Activated T-helper 1 cell treated with anti-CD3 and anti-CD28 coated beads, Interleukin-12 subunit alpha, Interleukin-12 subunit beta, Interleukin-2, Interleukin-4 antibody, amounts not matched to agents 30 ng/mL and 10 ng/mL and 1 ng/mL, durations not matched to agents 14 hours and 24 hours and 36 hours (primary cell): ENCODE measurements at regions of chr14 and their contacts with region 1.

Region 1: DNA sequence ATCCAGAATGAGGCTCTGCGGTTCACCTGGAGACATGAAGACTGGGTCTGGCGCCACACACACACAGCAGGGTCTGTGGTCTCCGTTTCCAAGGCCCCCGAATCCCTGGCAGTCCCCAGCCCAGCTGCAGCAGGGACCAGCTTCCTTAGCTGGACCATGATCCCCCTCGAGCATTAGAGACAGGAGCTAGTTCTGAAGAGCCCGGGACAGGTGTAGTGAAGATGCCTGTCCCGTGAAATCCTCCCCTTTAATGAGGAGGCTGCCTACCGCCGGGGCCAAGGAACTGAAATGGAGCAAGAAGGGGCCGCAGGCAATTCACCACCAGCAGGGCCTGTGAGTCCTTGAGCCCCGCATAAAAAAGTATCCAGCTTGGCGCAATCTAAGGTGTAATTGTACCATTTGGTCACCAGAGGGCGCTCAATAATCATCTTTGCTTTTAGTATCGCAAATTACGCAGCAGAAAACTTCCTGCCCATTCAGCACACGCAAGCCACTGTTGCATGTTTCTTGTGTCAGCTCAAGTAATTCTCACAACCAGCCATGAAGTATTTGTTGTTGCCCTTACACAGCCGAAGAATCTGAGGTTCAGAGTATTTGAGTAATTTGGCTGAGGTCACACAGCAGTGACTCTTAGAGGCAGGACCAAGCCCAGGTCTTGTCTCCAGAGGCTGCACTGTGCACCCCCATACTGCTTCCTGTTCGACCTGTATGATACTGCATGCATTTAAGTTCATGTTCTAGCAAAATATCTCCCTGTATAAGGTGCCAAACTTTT is 54.3 kb upstream of the PPP2R5C start:
- DNase-seq: peak; percentile 62
- H3K4me3 Mint-ChIP-seq: peak overlapping the region; percentile 0
- H3K27ac Mint-ChIP-seq: peak overlapping the region; percentile 63
- H3K4me1 Mint-ChIP-seq: peaks cover 31% of the 10 kb centered on the region
- H3K27me3 Mint-ChIP-seq: peaks cover 20% of the 10 kb centered on the region

Region 2: DNA sequence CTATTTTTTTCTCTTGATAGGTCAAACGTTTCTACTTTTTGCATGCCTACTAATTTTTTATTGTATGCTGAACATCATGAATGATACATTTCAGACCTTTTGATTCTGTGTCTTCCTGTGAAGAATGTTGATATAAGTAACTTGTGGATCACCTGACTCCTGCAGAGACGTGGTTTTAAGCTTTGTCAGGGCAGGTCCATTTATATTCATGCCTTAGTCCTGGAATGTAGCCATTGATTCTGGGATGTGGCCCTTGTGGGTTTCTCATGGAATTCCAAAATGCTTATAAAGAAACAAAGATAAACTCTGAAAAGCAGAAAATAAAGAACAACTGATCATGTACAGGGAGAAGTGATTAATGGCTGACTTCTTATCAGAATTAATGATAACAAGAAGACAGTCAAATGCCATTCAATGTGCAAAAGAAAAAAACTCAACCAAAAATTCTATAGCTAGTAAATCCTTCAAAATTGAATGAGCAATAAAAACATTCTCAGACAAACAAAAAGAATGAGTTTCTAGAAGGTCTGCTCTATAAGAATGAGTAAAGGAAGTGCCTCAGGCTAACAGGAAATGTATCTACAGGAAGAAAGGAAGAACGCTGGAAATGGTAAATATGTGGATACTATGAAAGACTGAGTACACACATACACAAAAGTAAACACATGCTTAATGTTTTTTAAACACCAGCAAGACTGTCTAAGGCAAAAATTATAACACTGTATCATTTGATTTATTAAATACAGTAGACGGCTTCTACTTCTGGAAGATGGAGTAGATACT is 430.8 kb before region 1 on chr14:
- intact Hi-C with region 1: no loop called
- DNase-seq: no peak
- H3K4me3 Mint-ChIP-seq: no peak overlapping the region
- H3K27ac Mint-ChIP-seq: no peak overlapping the region
- H3K4me1 Mint-ChIP-seq: no peaks in the 10 kb centered on the region
- H3K27me3 Mint-ChIP-seq: peaks cover 12% of the 10 kb centered on the region

Region 3: DNA sequence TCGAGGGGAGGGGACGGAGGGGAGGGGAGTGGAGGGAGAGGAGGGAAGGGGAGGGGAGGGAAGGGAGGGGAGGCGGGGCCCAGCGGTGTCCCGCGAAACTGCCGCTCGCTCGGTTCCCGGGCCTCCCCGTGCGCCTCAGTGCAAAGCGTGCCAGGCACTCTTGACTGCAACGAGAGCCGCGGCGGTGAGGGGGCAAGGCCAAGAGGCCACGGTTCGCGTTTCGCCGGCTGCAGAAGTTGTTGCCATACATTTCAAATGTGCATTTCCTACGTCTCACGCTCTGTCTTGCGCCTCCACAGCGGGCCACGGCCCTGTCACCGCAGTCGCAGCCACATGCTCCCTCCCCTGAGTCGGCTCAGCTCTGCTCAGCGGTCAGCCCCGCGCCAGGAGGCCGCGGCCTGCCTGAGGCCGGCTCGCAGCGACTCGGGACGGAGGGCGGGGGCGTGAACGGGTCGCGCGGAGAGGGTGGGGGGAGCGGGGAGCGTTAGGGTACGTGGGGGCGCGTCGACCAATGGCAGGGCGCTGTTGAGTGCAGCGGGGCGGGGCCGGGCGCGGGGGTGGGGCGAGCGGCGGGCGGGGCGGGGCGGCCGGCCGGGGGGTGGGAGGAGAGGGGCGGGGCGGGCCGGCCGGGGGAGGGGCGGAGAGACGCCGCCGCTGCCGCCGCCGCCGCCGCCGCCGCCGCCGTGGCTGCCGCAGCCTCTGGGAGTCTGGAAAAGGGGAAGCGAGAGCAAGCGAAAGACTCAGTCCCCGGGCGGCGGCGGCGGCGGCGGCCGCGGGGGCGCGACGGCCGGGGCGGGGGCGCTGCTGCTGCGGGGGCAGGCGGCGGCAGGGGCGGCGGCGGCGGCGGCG is 54.0 kb after region 1 on chr14 and contains the start of gene PPP2R5C:
- intact Hi-C with region 1: loop called (anchors 1 kb)
- DNase-seq: peak; percentile 72
- H3K4me3 Mint-ChIP-seq: peak within 1 kb of the TSS; percentile 90
- H3K27ac Mint-ChIP-seq: peak within 1 kb of the TSS; percentile 79
- H3K4me1 Mint-ChIP-seq: peaks cover 33% of the 10 kb centered on the region
- H3K27me3 Mint-ChIP-seq: peaks cover 3% of the 10 kb centered on the region
- total RNA-seq, gene PPP2R5C: 157 and 166 TPM in 2 replicates

Region 4: GRCh38 chr14:101823511-101824120 is 116.4 kb after region 1 on chr14:
- intact Hi-C with region 1: loop called (anchors 1 kb)
- DNase-seq: peak; percentile 74
- H3K4me3 Mint-ChIP-seq: peak overlapping the region; percentile 78
- H3K27ac Mint-ChIP-seq: peak overlapping the region; percentile 98
- H3K4me1 Mint-ChIP-seq: peaks cover 84% of the 10 kb centered on the region
- H3K27me3 Mint-ChIP-seq: no peaks in the 10 kb centered on the region

Region 5: DNA sequence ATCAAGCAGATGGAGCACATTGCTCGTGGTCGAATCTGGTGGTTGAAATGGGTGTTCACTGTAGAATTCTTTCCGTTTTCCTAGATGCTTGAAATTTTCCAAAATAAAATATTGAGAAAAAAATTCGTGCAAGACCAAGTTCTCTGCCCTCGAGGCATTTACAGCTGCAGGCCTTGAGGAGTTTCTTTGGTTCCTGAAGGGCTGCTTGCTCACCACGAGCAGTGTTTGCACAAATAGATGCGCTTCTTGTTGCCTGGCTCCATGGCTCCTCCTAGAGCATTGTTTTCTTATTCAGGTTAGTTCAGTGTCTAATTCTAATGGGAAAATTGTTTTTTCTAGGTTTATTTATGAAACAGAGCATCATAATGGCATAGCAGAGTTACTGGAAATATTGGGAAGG is 182.6 kb after region 1 on chr14:
- intact Hi-C with region 1: loop called (anchors 1 kb)
- DNase-seq: no peak
- H3K4me3 Mint-ChIP-seq: no peak overlapping the region
- H3K27ac Mint-ChIP-seq: no peak overlapping the region
- H3K4me1 Mint-ChIP-seq: no peaks in the 10 kb centered on the region
- H3K27me3 Mint-ChIP-seq: no peaks in the 10 kb centered on the region

Region 6: DNA sequence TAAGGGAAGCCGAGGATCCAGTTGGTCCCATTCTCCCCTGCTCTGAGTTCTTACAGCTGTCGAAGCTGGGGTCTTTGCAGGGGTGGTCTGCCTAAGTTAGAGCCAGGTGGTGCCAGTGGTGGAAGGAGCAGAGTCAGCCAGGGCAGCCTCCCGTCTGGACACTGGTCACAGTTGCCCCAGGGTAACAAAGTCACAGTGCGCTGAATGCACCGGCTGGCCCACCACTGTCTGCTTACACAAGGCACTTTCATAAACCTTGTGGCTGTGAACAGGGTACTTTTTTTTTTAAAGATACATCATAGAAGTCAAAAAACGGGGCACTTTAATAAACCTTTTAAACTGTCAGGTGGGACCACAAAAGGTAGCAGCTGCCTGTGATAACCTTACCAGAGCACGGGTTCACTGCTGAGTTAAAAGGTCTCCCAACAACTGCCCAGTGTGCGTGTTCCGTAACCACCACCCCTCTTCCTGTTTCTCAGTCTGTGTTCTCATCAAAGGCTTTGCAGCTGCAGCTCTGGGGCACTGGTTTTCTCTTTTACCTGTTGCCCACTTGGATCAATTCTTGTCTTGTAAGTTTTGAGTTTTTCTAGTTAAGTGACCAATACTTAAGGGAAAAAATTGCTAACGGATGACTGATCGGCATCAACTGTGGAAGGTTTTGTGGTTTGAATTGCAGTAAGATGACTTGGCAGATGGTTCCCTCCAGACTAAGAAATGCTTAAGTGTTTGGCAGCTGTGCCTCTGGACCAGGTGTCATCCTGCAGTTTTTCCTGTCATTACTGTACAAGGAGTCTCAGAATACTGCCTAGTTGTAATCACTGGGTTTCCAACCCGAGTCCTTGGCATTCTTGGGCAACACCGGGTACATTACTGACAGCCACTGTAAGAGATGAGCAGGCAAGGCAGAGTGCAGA is 313.1 kb after region 1 on chr14:
- intact Hi-C with region 1: loop called (anchors 2 kb)
- DNase-seq: peak; percentile 38
- H3K4me3 Mint-ChIP-seq: peak overlapping the region; percentile 32
- H3K27ac Mint-ChIP-seq: peak overlapping the region; percentile 76
- H3K4me1 Mint-ChIP-seq: peaks cover 20% of the 10 kb centered on the region
- H3K27me3 Mint-ChIP-seq: no peaks in the 10 kb centered on the region

Region 7: DNA sequence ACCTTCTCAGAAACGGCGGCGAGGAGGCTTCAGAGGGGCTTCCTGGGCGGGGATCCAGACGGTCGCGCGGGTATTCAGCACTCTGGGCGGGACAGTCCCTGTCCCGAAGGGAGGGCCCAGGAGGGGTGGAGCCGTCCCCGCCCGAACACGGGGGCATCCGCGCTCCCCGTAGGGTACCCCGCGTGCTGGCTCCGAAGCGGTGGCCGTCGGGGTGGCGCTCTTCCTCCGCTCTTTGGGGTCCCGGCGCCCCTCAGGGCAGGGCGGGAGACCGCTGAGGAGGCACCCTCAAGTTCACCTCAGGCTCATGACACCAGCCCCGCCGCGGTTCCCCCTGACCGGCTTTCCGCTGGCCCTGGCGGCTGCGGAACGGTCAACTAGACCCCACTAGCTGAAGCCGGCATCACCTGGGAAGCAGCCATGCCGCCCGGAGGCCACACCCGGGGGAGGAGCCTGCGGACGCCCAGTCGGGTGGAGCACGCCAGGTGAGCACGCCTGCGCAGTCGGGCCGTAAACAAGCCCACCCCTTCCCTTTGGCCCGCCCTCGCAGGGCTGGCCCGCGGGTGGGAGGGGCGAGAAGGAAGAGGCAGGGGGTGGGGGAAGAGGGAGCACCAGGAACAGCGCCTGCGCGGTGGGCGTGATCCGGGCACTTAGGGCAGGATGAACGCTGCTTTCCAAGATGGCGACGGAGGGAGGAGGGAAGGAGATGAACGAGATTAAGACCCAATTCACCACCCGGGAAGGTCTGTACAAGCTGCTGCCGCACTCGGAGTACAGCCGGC is 432.2 kb after region 1 on chr14 and contains the start of gene WDR20:
- intact Hi-C with region 1: loop called (anchors 5 kb)
- DNase-seq: peak; percentile 99
- H3K4me3 Mint-ChIP-seq: peak within 1 kb of the TSS; percentile 94
- H3K27ac Mint-ChIP-seq: peak within 1 kb of the TSS; percentile 91
- H3K4me1 Mint-ChIP-seq: peaks cover 19% of the 10 kb centered on the region
- H3K27me3 Mint-ChIP-seq: no peaks in the 10 kb centered on the region
- total RNA-seq, gene WDR20: 33.9 and 34.2 TPM in 2 replicates

Region 8: DNA sequence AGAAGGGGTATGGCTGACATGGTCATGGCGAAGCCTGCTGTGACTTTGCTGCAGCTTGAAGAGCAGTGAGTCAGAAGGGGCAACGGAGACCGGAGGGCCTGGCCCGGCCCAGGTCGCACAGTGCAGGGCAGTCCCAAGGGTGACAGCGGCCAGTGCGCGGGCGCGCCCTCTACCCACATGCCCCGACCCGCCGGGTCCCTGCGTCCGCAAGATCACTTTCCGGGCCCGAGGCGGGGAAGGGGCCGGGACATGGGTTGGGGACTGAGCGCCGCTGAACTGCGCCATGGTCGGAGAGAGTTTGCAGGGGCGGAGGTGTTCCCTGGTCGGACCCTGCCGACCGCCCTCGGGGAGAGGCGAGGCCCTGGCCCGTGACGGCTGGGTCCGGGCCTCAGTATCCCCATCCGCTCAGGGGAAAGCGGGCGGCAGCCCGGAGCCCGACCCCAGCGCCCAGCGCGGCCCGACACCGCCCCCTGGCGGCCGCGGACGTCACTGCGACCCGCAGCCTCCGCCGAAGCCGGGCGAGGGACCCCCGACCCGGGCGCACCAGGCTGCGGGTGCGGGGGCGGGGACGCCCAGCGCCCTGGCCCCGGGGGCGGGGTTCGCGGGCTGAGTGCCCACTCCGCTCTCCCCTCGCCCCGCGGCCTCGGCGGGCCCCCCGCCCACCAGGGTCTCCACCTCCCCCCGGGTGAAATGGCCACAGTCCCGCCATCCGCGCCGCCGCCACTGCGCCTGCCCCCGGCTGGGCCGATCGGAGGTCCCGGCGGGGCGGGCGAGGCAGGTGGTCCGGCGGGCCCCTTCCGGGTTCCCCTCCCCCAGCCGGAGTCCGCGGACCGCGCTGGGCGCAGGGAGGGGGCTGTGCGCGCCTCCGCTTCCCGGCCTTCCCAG is 809.5 kb after region 1 on chr14:
- intact Hi-C with region 1: loop called (anchors 5 kb)
- DNase-seq: peak; percentile 59
- H3K4me3 Mint-ChIP-seq: peak overlapping the region; percentile 82
- H3K27ac Mint-ChIP-seq: peak overlapping the region; percentile 61
- H3K4me1 Mint-ChIP-seq: no peaks in the 10 kb centered on the region
- H3K27me3 Mint-ChIP-seq: peaks cover 9% of the 10 kb centered on the region